ENCODE measurements at regions of chr17 and their contacts with region 1.

Region 1: GRCh38 chr17:67475236-67475937 is 98.3 kb downstream of the PITPNC1 start:
- DNase-seq: peak; percentile 92
- H3K4me3 Mint-ChIP-seq: peak overlapping the region; percentile 71
- H3K27ac Mint-ChIP-seq: peak overlapping the region; percentile 92
- H3K4me1 Mint-ChIP-seq: peaks cover 64% of the 10 kb centered on the region
- H3K27me3 Mint-ChIP-seq: no peaks in the 10 kb centered on the region

Region 2: GRCh38 chr17:67390646-67391384 is 84.6 kb before region 1 on chr17:
- CTCF ChIA-PET with region 1: interaction called, 235 read pairs
- POLR2A ChIA-PET with region 1: interaction called, 4 read pairs
- intact Hi-C with region 1: loop called (anchors 1 kb)
- DNase-seq: peak; percentile 88
- H3K4me3 Mint-ChIP-seq: peak overlapping the region; percentile 65
- H3K27ac Mint-ChIP-seq: peak overlapping the region; percentile 96
- H3K4me1 Mint-ChIP-seq: peaks cover 80% of the 10 kb centered on the region
- H3K27me3 Mint-ChIP-seq: no peaks in the 10 kb centered on the region

Region 3: DNA sequence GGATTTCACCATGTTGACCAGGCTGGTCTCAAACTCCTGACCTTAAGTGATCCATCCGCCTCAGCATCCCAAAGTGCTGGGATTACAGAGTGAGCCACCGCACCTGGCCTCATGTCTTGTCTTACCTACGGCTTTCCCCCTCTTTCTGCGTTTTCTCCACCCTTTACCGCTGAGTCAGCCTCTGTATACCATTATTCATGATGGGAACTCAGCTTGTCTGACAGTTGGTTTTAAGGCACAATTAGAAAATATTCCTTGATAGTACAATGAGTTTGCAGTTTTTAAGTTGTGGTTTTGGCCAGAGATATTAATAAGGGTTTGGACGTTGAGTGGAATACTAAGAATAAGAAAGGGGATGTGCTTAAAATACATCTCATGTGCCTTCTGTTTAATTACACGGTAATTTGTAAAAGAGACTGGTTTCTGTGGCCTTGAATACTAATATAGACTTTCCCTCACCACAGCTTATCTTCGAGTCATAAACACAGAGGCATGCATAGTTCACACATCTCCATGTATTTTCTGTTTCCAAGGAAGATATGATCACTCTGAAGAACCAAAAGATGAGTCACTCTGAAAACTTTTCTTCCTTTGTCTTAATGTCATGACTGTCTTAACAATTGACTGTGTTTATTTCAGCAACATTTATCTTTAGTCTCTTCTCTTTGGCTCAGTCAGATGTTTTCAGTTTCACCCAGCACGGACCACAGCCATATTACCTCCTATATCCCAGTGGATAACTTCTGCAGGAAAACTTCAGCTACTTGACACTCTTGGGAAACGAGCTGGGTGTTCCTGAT is 43.9 kb before region 1 on chr17:
- CTCF ChIA-PET with region 1: interaction called, 48 read pairs
- POLR2A ChIA-PET with region 1: interaction called, 6 read pairs
- intact Hi-C with region 1: loop called (anchors 1 kb)
- DNase-seq: peak; percentile 36
- H3K4me3 Mint-ChIP-seq: peak overlapping the region; percentile 58
- H3K27ac Mint-ChIP-seq: peak overlapping the region; percentile 89
- H3K4me1 Mint-ChIP-seq: peaks cover 69% of the 10 kb centered on the region
- H3K27me3 Mint-ChIP-seq: no peaks in the 10 kb centered on the region

Region 4: DNA sequence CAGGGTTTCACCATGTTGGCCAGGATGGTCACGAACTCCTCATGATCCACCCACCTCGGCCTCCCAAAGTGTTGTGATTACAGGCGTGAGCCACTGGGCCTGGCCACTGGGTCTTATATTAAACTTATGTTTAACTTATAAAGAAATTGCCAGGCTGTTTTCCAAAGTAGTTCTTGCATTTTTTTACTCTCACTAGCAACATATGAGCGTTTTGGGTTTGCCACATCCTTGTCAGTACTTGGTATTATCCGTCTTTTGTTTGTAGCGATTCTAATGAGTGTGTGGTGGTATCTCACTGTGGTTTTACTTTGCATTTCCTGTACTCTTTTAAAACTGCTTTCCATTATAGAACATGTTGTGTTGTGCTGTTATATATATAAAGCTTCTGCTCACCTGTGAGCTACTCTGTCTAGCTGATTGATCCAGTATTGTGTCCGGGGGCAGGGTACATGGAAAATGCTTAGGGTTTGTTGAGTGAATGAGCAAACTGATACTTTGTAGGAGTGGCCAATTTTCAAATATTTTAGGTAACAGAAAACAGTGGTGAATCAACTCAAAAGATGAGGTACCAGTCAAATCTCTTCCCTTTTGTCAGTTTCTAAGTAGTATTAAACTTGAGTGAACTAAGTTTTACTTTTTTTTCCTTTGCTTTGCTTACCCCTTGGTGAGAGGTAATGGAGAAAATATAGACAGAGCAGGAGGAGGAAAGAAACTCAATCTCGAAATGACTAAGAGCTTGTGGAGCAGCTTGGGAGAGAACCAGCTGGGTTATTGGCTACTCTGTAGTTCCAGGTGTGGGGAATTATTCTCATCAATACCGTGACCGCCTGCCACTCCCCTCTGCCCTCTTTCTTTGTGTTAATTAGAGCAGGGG is 22.5 kb before region 1 on chr17:
- CTCF ChIA-PET with region 1: interaction called, 40 read pairs
- POLR2A ChIA-PET with region 1: interaction called, 3 read pairs
- intact Hi-C with region 1: loop called (anchors 1 kb)
- DNase-seq: peak; percentile 63
- H3K4me3 Mint-ChIP-seq: peak overlapping the region; percentile 55
- H3K27ac Mint-ChIP-seq: peak overlapping the region; percentile 95
- H3K4me1 Mint-ChIP-seq: peaks cover 83% of the 10 kb centered on the region
- H3K27me3 Mint-ChIP-seq: no peaks in the 10 kb centered on the region

Region 5: DNA sequence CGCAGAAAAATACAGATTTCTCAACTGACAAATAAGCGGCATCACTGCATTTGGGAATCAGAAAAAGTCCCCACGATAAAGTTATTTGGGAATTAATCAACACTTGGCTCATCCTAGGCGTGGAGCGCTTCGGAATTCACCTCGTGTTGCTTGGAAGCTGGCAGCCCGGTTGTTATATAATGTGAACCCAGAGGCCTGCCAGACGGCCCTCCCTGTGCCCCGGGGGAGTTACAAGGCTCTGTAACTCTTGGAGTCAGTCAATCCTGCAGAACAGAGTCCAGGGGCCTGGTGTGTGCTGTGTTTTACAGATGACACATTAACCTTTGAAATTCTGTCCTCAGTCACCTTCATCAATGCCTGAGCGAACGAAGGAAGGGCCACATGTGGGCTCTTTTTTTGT is 12.8 kb after region 1 on chr17:
- CTCF ChIA-PET with region 1: interaction called, 12 read pairs
- POLR2A ChIA-PET with region 1: interaction called, 4 read pairs
- intact Hi-C with region 1: no loop called
- DNase-seq: no peak
- H3K4me3 Mint-ChIP-seq: no peak overlapping the region
- H3K27ac Mint-ChIP-seq: no peak overlapping the region
- H3K4me1 Mint-ChIP-seq: peaks cover 48% of the 10 kb centered on the region
- H3K27me3 Mint-ChIP-seq: no peaks in the 10 kb centered on the region

Region 6: GRCh38 chr17:67575325-67575724 is 99.9 kb after region 1 on chr17:
- CTCF ChIA-PET with region 1: no interaction called
- POLR2A ChIA-PET with region 1: no interaction called
- intact Hi-C with region 1: no loop called
- DNase-seq: no peak
- H3K4me3 Mint-ChIP-seq: no peak overlapping the region
- H3K27ac Mint-ChIP-seq: no peak overlapping the region
- H3K4me1 Mint-ChIP-seq: peaks cover 17% of the 10 kb centered on the region
- H3K27me3 Mint-ChIP-seq: no peaks in the 10 kb centered on the region

Region 7: DNA sequence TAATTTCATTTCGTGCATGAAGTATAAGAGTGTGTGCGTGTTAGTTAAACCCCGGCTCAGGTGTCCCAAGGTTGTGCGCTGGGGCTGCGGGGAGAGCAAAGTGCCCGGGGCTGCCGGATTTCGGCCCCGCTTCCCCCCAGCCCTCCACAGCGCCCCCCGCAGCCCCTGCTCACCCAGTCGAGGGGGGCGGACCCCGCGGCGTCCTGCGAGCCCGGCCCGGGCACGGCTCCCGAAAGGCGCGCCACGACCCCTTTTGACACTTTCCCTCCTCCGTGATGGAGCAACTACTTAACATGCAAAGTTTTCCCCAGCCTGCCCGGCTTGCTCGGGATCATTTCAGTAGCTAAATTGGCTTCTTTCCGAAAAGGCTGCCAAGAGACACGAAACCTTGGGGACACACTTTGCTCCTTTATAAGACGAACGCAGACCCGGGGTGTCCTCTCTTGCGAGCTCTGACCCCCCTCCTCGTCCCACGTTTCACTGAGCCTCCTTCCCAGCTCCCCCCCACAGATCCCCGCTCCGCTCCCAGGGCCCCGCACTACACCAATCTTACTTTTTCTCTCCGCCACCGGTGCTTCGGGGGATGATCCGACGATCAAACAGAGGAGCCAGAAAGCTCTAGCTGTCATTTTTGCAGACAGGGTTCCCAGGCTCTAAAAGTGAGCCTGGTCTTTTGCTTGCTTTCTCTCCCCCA is 520.3 kb after region 1 on chr17:
- CTCF ChIA-PET with region 1: no interaction called
- POLR2A ChIA-PET with region 1: no interaction called
- intact Hi-C with region 1: no loop called
- DNase-seq: peak; percentile 31
- H3K4me3 Mint-ChIP-seq: peak overlapping the region; percentile 76
- H3K27ac Mint-ChIP-seq: peak overlapping the region; percentile 68
- H3K4me1 Mint-ChIP-seq: peaks cover 30% of the 10 kb centered on the region
- H3K27me3 Mint-ChIP-seq: no peaks in the 10 kb centered on the region